ENCODE measurements at regions of chr1 and their contacts with region 1.

Region 1: DNA sequence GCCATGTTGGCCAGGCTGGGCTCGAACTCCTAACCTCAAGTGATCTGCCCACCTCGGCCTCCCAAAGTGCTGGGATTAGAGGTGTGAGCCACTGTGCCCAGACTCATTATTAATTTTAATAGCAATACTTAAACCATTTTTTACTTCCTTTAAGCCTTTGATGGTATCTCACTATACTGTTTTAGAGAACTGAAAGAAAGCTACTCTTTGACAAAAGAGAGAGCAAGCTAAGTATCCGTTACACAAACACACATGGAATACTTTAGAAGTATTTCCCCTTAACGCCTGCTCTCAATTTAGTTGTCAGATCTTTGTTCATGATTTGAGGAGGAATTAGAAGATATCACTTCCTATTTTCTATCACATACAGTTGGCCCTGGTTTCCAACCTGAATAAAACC is 189.4 kb downstream of the COP1 start:
- DNase-seq: no peak
- H3K4me3 Mint-ChIP-seq: no peak overlapping the region
- H3K27ac Mint-ChIP-seq: no peak overlapping the region
- H3K4me1 Mint-ChIP-seq: peaks cover under 1% of the 10 kb centered on the region
- H3K27me3 Mint-ChIP-seq: no peaks in the 10 kb centered on the region

Region 2: DNA sequence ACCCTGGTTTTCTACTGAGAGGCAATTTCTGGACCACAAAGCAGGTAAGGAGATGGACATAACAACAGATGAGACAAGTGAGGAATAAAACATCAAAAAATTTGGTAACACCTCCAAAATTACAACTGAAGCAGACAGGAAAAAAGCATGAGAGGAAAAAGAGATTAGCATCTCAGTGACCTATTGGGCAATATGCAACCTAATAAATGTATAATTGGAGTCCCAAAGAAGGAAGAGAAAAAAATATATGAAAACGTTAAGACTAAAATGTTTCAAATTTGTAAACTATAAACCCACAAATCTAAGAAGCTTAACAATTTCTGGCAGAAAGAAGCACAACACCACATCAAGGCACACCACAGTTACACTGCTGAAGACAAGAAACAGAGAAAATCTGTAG is 66.1 kb before region 1 on chr1:
- CTCF ChIA-PET with region 1: no interaction called
- intact Hi-C with region 1: loop called (anchors 10 kb)
- DNase-seq: no peak
- H3K4me3 Mint-ChIP-seq: no peak overlapping the region
- H3K27ac Mint-ChIP-seq: no peak overlapping the region
- H3K4me1 Mint-ChIP-seq: peaks cover 1% of the 10 kb centered on the region
- H3K27me3 Mint-ChIP-seq: no peaks in the 10 kb centered on the region